Cardiac septum (tissue), 1 donor: ENCODE measurements at regions of chr4 and their contacts with region 1.

Region 1: DNA sequence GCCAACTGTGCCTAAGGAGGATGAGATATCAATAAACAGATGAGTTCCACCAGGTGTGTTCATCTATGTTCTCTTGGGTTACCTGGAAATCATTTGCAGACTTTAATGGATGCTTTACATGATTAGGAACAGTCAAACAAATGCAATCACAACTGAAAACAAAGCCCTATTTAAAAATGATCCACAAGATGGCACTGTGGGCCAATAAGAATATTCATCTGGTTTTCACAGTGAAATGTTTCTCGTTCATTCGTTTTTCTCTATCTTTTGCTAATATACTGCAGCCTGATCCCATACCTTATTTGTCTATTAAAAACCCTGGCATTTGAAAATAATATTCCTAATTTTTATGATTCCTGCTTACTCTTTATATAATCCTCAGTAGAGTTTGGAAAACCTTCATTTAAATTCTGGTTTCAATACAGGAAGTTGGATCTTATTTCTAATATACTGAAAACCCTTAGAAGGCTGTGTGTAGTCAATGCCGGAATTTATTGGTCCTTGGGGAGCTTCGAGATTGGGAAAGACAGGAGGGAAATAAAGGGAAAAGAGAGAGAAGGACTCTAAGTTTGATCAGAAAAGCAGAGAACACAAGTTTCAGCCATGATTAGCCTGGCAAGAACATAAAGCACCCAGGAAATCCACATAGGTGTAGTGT is 63.8 kb upstream of the TAPT1 start:
- DNase-seq: no peak

Region 2: DNA sequence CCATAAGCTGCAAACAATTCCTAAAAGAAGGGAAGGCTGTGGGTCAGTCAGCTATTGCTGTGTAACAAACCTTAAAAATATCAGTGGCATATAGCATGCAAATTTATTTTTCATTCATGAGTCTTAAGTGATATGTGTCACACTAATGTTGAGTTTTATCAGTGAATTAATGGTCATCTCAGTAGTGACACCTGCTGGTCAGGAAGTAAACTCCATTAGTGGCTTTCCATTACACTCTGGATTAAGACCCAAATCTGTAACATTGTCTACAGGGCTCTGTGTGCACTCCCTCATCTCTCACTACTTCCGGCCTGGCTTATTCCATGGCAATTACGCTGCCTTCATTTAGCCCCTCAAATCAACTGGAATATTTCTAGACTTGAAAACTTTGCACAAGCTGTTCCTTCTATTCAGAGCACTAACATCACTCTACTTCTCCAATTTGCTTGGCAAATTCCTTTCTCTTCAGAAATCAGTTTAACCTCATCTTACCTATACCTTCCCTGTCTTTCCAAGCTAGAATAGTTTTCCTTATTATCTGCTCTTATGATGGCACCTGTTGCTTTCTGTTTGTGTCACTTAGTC is 153.6 kb after region 1 on chr4:
- intact Hi-C with region 1: loop called (anchors 5 kb)
- DNase-seq: no peak

Region 3: GRCh38 chr4:17469931-17470649 is 1180.1 kb after region 1 on chr4:
- intact Hi-C with region 1: loop called (anchors 5 kb)
- DNase-seq: no peak